Pancreas (tissue), 10 donors: ENCODE measurements at regions of chr9 and their contacts with region 1.

Region 1: GRCh38 chr9:38294220-38294960 is 98.1 kb upstream of the ALDH1B1 start:
- DNase-seq: no peak
- ATAC-seq: no peak
- H3K4me3 ChIP-seq: no peak overlapping the region
- H3K27ac ChIP-seq: no peak overlapping the region
- H3K4me1 ChIP-seq: no peaks in the 10 kb centered on the region
- H3K27me3 ChIP-seq: no peaks in the 10 kb centered on the region
- CTCF ChIP-seq: no peak

Region 2: DNA sequence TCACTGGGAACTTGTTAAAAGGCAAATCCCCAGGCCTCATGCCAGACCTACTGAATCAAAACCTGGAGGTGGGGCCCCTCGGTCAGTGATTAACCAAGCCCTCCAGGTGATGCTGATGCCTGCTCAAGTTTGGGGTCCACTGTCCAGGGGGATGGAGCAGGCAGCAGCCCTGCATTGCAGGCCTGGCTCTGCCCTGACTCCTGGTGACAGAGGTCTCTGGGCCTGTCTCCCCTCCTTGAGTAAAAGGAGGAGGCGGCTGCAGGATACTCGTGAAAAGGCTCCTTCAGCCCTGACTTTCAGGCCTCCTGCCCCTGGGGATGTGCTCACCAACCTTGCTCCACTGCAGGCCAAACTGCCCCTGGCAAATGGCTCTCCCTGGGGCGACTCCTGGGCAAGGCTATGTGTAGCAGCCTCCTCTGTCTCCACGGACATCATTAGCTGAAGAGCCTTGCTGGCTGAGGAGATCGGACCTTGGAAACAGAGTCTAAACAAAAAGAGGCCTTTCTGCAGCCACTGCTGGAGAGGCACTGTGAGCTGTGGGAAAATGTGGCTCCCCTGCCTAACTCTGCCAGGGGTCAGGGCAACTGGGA is 36.7 kb before region 1 on chr9:
- intact Hi-C with region 1: loop called in 1 of 3 experiments (anchors 5 kb)
- DNase-seq: no peak
- ATAC-seq: no peak
- H3K4me3 ChIP-seq: no peak overlapping the region
- H3K27ac ChIP-seq: no peak overlapping the region
- H3K4me1 ChIP-seq: no peaks in the 10 kb centered on the region
- H3K27me3 ChIP-seq: no peaks in the 10 kb centered on the region
- CTCF ChIP-seq: no peak

Region 3: DNA sequence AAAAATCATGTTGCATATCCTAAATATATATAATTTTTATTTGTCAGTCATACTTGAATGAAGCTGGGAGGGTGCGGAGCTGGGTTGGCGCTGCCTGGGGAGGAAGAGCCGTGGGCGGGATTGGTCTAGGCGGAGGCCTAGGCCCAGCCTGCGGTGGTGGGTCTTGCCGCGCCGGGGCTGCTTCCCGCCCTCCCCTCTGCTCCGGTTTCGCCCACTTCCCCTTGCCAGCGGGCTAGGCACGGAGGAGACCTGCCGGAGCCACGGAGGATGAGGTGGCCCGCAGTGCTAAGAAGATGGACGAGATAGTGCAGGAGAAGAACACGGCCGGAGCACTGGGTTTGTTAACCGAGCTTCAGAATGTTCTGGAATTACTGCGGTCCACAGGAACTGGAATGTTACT is 183.8 kb after region 1 on chr9:
- intact Hi-C with region 1: no loop called
- DNase-seq: no peak
- ATAC-seq: no peak
- H3K4me3 ChIP-seq: no peak overlapping the region
- H3K27ac ChIP-seq: no peak overlapping the region
- H3K4me1 ChIP-seq: no peaks in the 10 kb centered on the region
- H3K27me3 ChIP-seq: no peaks in the 10 kb centered on the region
- CTCF ChIP-seq: no peak